GM18951 (cell line): ENCODE measurements at regions of chr10 and their contacts with region 1.

Region 1: GRCh38 chr10:33155720-33156638 is 178.5 kb downstream of the NRP1 start:
- POLR2A ChIP-seq: no peak

Region 2: GRCh38 chr10:32795598-32796183 is 360.3 kb before region 1 on chr10:
- in situ Hi-C with region 1: loop called (anchors 25 kb)
- POLR2A ChIP-seq: no peak

Region 3: GRCh38 chr10:33334805-33335550 is 179.0 kb after region 1 on chr10:
- in situ Hi-C with region 1: no loop called
- POLR2A ChIP-seq: no peak